ENCODE measurements at regions of chr5 and their contacts with region 1.

Region 1: GRCh38 chr5:115634343-115635132 is 8.7 kb upstream of the TMED7 start:
- DNase-seq: peak; percentile 92
- ATAC-seq: peak; percentile 98

Region 2: DNA sequence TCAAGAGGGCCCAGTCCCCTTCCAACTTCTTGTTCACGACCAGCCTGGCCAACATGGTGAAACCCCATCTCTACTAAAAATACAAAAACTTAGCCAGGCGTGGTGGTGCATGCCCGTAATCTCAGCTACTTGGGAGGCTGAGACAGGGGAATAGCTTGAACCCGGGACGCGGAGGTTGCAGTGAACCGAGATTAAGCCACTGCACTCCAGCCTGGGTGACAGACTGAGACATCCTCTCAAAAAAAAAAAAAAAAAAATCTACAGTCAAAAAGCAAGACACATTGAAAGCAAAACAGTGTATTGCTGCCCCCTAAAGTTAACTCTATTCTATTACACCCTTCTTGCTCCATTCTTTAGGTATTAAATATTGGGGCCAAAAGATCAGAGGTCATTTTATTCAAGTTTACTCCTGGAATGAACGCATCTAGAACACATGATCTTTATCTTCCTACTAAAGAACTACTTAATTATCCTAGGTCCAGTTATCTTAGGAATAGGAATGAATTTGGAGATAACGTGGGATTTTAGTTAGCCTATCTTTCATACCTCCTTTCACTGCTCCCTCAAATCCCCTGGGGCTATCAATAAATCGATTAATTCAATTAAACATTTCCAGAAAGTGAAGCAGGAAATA is 204.5 kb after region 1 on chr5:
- intact Hi-C with region 1: loop called (anchors 2 kb)
- DNase-seq: no peak
- ATAC-seq: no peak

Measured in Right ventricle myocardium superior (tissue), 1 donor.